GM10248 (cell line): ENCODE measurements at regions of chr1 and their contacts with region 1.

Region 1: DNA sequence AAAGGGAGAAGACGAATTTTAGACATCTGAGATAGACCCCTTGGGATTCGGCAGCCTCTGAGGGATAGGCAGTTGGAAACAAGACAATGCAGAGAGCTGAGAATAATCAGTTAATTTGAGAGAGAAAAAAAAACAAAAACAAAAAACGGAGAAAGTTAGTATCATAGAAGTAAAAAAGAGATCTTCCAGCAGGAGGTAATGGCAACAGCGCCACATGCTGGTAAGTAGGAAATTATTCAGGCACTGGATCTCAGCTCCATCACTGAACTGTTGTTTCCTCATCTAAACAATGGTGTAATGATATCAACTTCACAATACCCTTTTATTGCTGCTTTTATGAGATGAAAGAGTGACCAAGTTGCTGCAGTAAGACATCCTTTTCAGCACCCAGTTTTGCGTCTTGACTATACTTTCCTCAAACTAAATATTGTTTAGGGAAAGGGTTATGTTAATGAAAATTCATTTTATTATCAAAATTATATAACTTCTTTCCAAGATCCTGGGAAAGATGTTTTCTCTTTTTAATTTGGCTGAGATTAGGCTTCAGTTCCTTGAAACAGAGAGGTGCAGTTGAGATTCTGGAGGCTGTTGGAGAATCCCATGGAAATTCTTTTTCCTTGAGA is 91.4 kb upstream of the KCNA3 start:
- DNase-seq: peak; percentile 63
- CTCF ChIP-seq: peak; percentile 76

Region 2: DNA sequence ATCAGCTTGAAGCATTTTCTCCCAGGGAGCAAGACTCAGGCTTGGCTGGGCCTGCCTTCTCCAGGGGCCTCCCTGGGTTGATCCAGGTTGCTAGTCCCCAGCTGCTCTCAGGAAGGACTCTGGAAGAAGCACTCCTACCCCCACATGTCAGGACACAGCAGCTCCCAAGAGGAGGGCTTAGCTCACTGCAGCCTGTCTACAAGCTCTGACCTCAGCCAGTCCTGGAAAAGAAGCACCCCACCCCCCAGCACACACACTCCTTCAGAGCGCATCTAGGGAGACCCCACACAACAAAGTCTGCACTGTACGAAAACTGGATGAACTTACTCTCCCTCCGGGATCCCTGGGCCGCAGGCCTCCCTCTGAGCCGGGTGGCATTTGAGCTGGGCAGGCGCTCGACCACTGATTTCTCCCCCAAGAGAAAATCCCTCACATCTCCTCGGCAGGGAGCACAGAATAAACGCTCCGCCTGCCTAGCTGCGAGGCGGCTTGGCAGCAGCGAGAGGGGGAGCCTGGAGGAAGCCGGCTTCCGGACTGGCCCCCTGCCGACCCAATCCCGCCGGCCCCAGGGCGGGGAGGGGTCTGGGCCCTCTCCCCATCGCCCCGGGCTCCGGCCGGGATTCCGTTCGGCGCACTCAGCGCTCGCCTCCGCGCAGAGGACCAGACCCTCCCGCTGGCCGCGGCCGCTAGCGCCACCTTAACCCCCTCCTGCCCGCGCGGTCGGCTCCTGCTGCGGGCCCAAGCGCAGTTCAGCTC is 160.1 kb before region 1 on chr1 and contains the start of gene KCNA2:
- CTCF ChIA-PET with region 1: interaction called, 11 read pairs
- POLR2A ChIA-PET with region 1: no interaction called
- DNase-seq: no peak
- CTCF ChIP-seq: no peak

Region 3: DNA sequence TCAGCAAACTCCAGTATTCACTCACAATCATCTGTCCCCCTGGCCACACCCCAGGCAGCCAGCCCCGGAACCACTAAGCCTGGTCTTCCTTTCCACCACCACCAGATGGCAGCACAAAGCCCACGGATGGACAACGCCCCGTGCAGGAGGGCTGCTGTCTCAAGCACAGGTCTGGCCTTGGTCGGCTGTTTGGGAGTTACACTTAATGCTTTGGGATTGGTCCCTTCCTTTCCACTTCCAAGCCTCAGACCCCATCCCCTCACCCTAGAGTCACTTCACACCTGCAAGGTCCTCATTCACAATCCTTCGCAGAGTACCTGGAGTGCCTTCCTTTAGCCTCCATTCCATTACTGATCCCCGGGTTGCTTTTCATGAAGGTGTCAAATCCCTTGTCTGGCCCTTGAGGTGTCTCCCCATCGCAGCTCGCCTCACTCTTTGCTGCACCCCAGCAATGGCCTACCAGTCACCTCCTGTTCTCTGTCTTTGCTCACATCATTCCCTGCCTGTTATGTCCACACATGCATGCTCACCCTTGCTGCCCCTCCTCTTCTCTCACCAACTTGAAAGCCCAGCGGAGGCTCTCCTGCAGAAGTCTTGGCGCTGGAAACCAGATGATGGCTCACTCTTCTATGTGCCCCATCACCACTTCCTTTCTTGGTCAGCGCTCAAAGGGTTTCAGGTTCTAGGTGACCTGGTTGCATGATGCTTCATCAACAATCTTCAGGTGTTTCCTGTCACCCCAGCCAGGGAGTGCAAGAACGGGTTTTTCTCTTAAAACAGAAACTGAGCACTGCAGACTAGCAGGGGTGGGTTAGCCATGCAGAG is 135.1 kb before region 1 on chr1:
- CTCF ChIA-PET with region 1: interaction called, 71 read pairs
- POLR2A ChIA-PET with region 1: no interaction called
- DNase-seq: peak; percentile 67
- CTCF ChIP-seq: peak; percentile 75

Region 4: DNA sequence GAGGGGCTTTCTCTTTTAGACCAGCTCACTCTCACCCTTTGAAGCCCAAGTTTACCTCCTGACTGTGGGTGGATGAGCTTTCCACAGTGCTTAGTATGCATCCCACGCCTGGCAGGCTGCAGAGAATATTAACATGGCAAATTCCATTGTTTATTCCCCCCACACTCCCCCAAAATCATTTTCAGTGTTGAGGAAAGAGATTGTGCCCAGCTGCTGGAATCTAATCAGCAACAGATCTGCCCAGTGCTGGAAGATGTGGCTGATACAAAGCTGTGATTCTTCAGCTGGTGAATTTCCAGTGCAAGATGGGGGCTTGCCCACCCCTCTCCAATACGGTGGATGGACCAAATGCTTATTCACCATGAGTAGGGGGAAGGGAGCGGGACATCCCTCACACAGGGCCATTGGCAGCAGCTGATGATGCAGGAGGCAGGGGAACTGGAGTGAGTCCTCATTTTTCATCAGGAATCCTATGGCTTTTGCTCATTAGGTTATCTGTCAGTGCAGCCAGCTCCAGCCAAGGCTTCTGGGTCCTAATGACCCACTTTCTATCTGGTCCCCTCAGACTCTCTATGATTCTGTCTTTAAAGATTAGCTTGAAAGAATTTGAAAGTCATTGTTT is 51.7 kb before region 1 on chr1:
- CTCF ChIA-PET with region 1: interaction called, 10 read pairs
- POLR2A ChIA-PET with region 1: no interaction called
- DNase-seq: no peak
- CTCF ChIP-seq: no peak

Region 5: GRCh38 chr1:110734133-110734680 is 31.9 kb before region 1 on chr1:
- CTCF ChIA-PET with region 1: interaction called, 16 read pairs
- POLR2A ChIA-PET with region 1: no interaction called
- DNase-seq: no peak
- CTCF ChIP-seq: no peak

Region 6: GRCh38 chr1:110780600-110781484 is 14.7 kb after region 1 on chr1:
- CTCF ChIA-PET with region 1: interaction called, 102 read pairs
- POLR2A ChIA-PET with region 1: no interaction called
- DNase-seq: peak; percentile 79
- CTCF ChIP-seq: peak; percentile 79

Region 7: GRCh38 chr1:110811529-110811928 is 45.4 kb after region 1 on chr1:
- CTCF ChIA-PET with region 1: interaction called, 16 read pairs
- POLR2A ChIA-PET with region 1: no interaction called
- DNase-seq: no peak
- CTCF ChIP-seq: no peak

Region 8: DNA sequence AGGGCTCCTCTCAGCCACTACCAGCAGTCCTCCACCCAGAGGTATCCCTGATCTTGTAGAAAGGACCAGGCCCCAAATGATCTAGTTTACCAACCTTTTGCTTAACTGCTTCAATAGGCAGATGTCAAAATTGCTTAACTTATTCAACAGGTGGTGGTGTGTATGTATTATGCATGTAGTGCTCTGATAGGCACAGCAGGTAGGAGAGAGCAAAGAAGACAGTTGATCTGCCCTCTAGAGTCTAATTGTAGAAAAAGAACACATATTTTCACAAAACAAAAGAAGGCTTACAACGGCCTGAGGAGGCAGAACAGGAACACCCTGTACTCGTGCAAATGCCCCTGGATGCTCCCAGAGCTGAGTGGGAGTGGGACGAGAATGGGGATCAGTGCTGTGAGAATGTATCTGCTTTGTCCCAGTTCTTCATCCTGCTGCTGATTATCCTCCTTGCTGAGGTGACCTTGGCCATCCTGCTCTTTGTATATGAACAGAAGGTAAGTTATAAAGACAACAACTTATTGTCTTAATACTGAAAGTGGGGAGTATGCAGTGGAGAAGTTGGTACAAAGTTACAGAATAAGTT is 127.9 kb after region 1 on chr1:
- CTCF ChIA-PET with region 1: no interaction called
- POLR2A ChIA-PET with region 1: no interaction called
- DNase-seq: no peak
- CTCF ChIP-seq: no peak